ENCODE measurements at regions of chr9 and their contacts with region 1.

Region 1: GRCh38 chr9:37913480-37914153 is 9.7 kb upstream of the SLC25A51 start:
- DNase-seq: peak; percentile 90
- ATAC-seq: peak; percentile 88

Region 2: GRCh38 chr9:38068866-38069629 is 155.4 kb after region 1 on chr9 and contains the start of gene SHB:
- intact Hi-C with region 1: loop called (anchors 10 kb)
- DNase-seq: peak; percentile 85
- ATAC-seq: peak; percentile 71
- total RNA-seq, gene SHB: 15.9 TPM

Region 3: GRCh38 chr9:38432922-38433510 is 519.4 kb after region 1 on chr9:
- intact Hi-C with region 1: loop called (anchors 10 kb)
- DNase-seq: no peak
- ATAC-seq: no peak

Measured in sciatic nerve (tissue), 2 donors.